T-cell (primary cell): ENCODE measurements at regions of chr7 and their contacts with region 1.

Region 1: DNA sequence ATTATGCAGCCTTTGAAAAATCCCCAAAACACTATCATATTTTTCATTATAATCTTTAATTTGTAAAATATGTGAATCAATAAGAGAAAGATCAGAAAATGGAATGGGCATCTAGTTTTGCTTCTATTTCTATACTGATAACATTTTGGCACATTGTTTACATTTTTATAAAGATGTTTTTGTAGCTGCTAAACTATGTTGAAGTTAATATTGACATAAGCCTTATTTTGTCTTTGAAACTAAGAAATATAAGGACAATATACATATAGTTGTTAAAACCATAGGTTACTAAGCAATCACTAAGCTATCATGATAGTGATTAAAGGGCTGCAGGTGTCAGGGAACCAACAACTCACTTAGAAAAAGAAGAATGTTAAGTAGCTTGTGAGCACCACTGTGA is 60.5 kb downstream of the GPR85 start:
- DNase-seq: no peak
- ATAC-seq: no peak
- H3K4me3 ChIP-seq: no peak overlapping the region
- H3K4me3 Mint-ChIP-seq: no peak overlapping the region
- H3K27ac ChIP-seq: no peak overlapping the region
- H3K27ac Mint-ChIP-seq: no peak overlapping the region
- H3K4me1 ChIP-seq: no peaks in the 10 kb centered on the region
- H3K4me1 Mint-ChIP-seq: no peaks in the 10 kb centered on the region
- H3K27me3 ChIP-seq: no peaks in the 10 kb centered on the region
- H3K27me3 Mint-ChIP-seq: peaks cover 0 to 14% of the 10 kb centered on the region in 2 donors

Region 2: GRCh38 chr7:113060100-113060499 is 34.0 kb after region 1 on chr7:
- CTCF ChIA-PET with region 1: interaction called in 1 of 2 experiments, 12 read pairs
- POLR2A ChIA-PET with region 1: no interaction called
- DNase-seq: no peak
- ATAC-seq: no peak
- H3K4me3 ChIP-seq: no peak overlapping the region
- H3K4me3 Mint-ChIP-seq: no peak overlapping the region
- H3K27ac ChIP-seq: no peak overlapping the region
- H3K27ac Mint-ChIP-seq: no peak overlapping the region
- H3K4me1 ChIP-seq: no peaks in the 10 kb centered on the region
- H3K4me1 Mint-ChIP-seq: no peaks in the 10 kb centered on the region
- H3K27me3 ChIP-seq: no peaks in the 10 kb centered on the region
- H3K27me3 Mint-ChIP-seq: peaks cover 16 to 30% of the 10 kb centered on the region in 2 donors